Activated naive CD4-positive, alpha-beta T cell treated with anti-CD3 and anti-CD28 coated beads, Interleukin-2, amount 10 ng/mL, durations not matched to agents 7 days and 5 days (primary cell): ENCODE measurements at regions of chr16 and their contacts with region 1.

Region 1: DNA sequence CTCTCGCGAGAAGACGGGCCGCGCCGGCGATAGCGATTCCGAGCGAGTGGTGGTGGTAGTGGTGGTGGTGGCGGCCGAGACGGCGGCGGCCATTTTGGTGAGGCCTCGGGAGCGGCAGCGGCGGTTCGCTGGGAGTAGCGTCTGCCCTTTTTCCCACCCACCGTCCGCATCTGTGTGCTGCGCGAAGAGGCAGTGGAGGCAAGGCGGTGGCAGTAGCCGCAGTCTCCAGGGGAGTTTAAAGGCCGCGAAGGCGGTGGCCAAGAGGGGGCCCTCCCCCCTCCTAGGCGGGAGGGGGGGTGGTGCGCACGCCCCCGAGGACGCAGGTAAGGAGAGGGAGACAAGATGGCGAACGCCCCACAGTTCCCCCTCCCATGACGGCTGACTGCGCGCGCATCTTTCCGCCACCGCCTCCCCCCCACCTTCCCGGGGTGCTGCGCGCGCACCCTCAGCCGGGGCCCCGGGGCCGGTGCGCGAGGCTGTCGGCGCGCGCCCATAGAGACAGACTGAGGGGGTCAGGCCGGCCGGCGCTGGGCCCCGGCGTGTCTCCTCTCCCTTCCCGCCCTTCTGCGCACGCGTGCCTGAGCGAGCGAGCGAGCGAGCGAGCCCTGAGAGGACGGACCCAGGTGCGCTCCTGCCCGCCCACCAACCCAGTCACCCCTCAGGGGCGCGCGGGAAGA is 694 bp upstream of the SRCAP start:
- DNase-seq: peak; percentile 100
- H3K4me3 Mint-ChIP-seq: peak overlapping the region; percentile 100
- H3K27ac Mint-ChIP-seq: peak overlapping the region; percentile 99
- H3K4me1 Mint-ChIP-seq: peaks cover 44% of the 10 kb centered on the region
- H3K27me3 Mint-ChIP-seq: peaks cover 4% of the 10 kb centered on the region

Region 2: GRCh38 chr16:30657866-30658730 is 40.2 kb before region 1 on chr16 and contains the start of gene FBRS:
- CTCF ChIA-PET with region 1: interaction called, 56 read pairs
- DNase-seq: peak; percentile 100
- H3K4me3 Mint-ChIP-seq: peak within 1 kb of the TSS; percentile 79
- H3K27ac Mint-ChIP-seq: peak within 1 kb of the TSS; percentile 99
- H3K4me1 Mint-ChIP-seq: peaks cover 56% of the 10 kb centered on the region
- H3K27me3 Mint-ChIP-seq: no peaks in the 10 kb centered on the region

Region 3: DNA sequence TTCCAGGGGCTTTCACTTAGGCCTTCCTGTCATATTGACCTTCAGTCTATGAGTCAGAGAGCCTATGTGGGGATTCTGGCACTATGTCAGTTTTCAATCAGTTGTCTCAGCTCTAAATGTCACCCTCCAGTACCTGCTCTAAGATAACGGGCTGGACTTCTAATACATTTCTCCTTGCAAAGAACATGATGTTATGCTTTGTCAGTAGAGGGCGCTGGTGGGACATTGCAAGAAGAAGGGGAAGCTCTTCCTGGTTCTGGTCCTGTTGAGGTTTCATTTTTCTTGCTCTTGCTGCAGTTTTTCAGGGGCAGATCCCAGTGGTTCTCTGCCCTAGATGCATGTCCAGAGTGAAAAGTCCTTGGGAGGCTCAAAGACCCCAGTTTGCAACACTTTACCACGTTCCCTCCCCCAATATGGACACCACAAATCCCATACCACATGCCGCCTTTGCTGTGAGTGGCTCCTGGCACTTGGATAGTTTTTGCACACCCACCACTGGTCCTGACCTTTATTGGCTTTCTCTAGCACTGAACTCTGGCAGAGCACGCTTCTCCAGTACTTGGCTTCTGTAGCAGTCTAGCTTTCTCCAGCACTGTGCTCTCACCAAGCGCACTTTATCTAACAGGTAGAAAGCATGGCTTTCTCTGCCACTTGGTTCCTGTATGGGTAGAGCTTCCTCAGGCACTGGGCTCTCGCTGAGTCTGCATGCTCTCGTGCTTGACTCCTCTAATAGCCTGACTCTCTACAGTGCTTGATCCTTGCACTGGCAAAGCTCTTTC is 146.6 kb after region 1 on chr16:
- CTCF ChIA-PET with region 1: no interaction called
- DNase-seq: peak; percentile 89
- H3K4me3 Mint-ChIP-seq: peak overlapping the region; percentile 4
- H3K27ac Mint-ChIP-seq: peak overlapping the region; percentile 20
- H3K4me1 Mint-ChIP-seq: peaks cover 12% of the 10 kb centered on the region
- H3K27me3 Mint-ChIP-seq: peaks cover 18% of the 10 kb centered on the region